ENCODE measurements at regions of chr1 and their contacts with region 1.

Region 1: GRCh38 chr1:202009326-202010179 is 834 bp upstream of the ELF3 start:
- DNase-seq: peak; percentile 91 to 92
- ATAC-seq: peak; percentile 58 to 67
- H3K4me3 ChIP-seq: peak overlapping the region; percentile 95
- H3K27ac ChIP-seq: peak overlapping the region; percentile 93 to 94
- H3K4me1 ChIP-seq: peaks cover 55% of the 10 kb centered on the region
- CTCF ChIP-seq: peak; percentile 95
- EP300 ChIP-seq: no peak
- POLR2A ChIP-seq: no peak
- RAD21 ChIP-seq: peak; percentile 96 to 97

Region 2: DNA sequence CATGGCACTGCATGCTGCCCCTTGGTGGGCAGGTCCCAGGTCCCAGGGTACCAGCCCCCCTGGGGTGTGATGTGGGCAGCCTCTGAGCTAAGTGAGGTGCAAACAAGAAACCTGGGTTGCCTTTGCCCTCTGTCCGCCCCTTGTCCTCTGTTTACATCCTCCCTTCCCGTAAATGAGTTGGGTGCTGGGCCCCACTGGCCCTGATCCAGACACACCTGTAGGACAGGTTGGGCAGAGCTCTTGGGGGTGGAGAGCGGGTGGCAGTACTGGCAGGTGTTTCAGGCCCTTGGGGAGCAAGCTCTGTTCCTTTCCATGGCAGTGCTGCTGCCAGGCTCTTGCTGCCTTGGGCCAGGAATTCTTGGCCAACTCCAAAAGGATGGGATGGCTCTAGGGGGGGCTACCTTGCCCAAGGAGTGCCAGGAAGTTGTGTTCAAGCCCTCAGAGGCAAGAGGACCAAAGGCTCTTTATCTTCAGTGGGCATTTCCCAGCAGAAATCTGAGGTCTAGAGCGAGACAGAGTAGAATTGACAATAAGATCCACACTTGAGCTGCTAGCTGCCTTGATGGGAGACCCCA is 36.8 kb after region 1 on chr1:
- CTCF ChIA-PET with region 1: interaction called, 7 read pairs
- POLR2A ChIA-PET with region 1: interaction called, 36 read pairs
- DNase-seq: no peak
- ATAC-seq: peak; percentile 3 to 4; a peak in 3 of 6 replicates
- H3K4me3 ChIP-seq: no peak overlapping the region
- H3K27ac ChIP-seq: peak overlapping the region; percentile 85 to 97
- H3K4me1 ChIP-seq: peaks cover 83% of the 10 kb centered on the region
- CTCF ChIP-seq: no peak
- EP300 ChIP-seq: no peak
- POLR2A ChIP-seq: no peak
- RAD21 ChIP-seq: no peak

Region 3: GRCh38 chr1:202063100-202063499 is 53.5 kb after region 1 on chr1:
- CTCF ChIA-PET with region 1: interaction called, 26 read pairs
- POLR2A ChIA-PET with region 1: interaction called, 70 read pairs
- DNase-seq: peak in 1 of 2 experiments; percentile 95
- ATAC-seq: peak; percentile 47 to 55
- H3K4me3 ChIP-seq: no peak overlapping the region
- H3K27ac ChIP-seq: peak overlapping the region; percentile 97 to 98
- H3K4me1 ChIP-seq: peaks cover 74% of the 10 kb centered on the region
- CTCF ChIP-seq: no peak
- EP300 ChIP-seq: peak; percentile 64 to 76; a peak in 3 of 5 replicates
- POLR2A ChIP-seq: no peak
- RAD21 ChIP-seq: 0 out of 5 replicates have a peak, but pooled peaks of 1 of the 2 experiments have one; percentile 24

Region 4: GRCh38 chr1:202084750-202085681 is 75.5 kb after region 1 on chr1:
- CTCF ChIA-PET with region 1: interaction called, 8 read pairs
- POLR2A ChIA-PET with region 1: interaction called, 18 read pairs
- DNase-seq: peak in 1 of 2 experiments; percentile 70
- ATAC-seq: peak; percentile 64 to 68
- H3K4me3 ChIP-seq: no peak overlapping the region
- H3K27ac ChIP-seq: peak overlapping the region; percentile 60 to 79
- H3K4me1 ChIP-seq: peaks cover 58% of the 10 kb centered on the region
- CTCF ChIP-seq: no peak
- EP300 ChIP-seq: no peak
- POLR2A ChIP-seq: no peak
- RAD21 ChIP-seq: no peak

Region 5: DNA sequence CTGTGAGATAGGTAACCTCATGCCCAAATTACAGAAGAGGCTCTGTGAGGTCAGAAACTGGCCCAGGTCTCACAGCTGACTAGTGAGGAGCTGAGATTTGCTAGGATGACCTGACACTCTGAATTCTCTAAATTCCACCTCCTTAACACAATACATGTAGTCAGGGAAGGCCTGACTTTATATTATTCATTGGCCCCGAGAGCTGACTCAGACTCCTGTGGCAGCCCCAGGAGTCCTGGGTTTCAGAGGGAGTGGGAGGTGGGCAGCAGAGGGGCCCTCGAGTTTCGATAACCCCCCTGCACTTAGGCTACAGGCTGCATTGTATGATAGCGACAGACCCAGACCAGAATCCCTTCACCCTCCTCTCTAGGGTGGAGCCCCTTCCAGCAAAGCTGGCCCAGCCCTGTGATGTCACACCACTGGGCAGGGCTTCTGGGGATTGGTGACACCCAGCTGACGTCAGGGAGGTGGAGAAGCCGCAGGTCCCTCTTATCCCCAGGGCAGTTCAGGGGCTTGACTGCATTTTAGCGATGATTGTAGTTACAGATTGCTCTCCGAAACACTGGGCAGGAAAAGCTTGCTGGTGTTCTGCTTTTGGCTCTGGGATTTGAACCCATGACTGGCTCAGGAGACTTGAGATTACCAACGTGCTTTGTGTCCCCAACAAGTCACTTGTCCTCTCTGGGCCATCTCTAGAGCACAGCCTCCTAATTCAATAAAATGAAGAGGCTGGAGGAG is 96.2 kb after region 1 on chr1:
- CTCF ChIA-PET with region 1: interaction called, 1,624 read pairs
- POLR2A ChIA-PET with region 1: interaction called, 69 read pairs
- DNase-seq: peak; percentile 91 to 93
- ATAC-seq: peak; percentile 85 to 89
- H3K4me3 ChIP-seq: no peak overlapping the region
- H3K27ac ChIP-seq: peak overlapping the region; percentile 91 to 94
- H3K4me1 ChIP-seq: peaks cover 66% of the 10 kb centered on the region
- CTCF ChIP-seq: no peak
- EP300 ChIP-seq: no peak
- POLR2A ChIP-seq: no peak
- RAD21 ChIP-seq: 0 out of 5 replicates have a peak, but pooled peaks of 1 of the 2 experiments have one; percentile 11

Region 6: DNA sequence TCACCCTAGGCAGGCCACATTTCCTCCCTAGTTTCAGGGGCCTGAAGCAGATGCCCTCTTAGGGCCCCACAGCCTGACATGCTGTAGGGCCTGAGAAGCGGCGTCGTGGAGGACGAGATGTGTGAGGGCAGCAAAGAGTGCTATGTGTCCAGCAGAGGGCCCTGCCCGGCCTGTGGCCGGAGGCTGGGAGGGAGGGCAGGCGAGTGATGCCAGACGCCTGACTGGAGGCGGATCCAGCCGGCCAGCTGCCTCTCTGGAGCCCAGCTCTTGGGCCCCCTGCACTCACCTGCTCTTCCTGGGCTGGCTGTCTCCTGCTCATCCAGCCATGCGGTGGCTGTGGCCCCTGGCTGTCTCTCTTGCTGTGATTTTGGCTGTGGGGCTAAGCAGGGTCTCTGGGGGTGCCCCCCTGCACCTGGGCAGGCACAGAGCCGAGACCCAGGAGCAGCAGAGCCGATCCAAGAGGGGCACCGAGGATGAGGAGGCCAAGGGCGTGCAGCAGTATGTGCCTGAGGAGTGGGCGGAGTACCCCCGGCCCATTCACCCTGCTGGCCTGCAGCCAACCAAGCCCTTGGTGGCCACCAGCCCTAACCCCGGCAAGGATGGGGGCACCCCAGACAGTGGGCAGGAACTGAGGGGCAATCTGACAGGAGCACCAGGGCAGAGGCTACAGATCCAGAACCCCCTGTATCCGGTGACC is 113.2 kb after region 1 on chr1 and contains the start of gene GPR37L1:
- CTCF ChIA-PET with region 1: interaction called, 1,624 read pairs
- POLR2A ChIA-PET with region 1: interaction called, 69 read pairs
- DNase-seq: peak; percentile 64 to 75
- ATAC-seq: peak; percentile 76 to 85
- H3K4me3 ChIP-seq: no peak within 1 kb of the TSS
- H3K27ac ChIP-seq: peak within 1 kb of the TSS in 1 of 2 experiments; percentile 60; a peak in 3 of 6 replicates
- H3K4me1 ChIP-seq: peaks cover 20% of the 10 kb centered on the region
- CTCF ChIP-seq: peak; percentile 46
- EP300 ChIP-seq: no peak
- POLR2A ChIP-seq: no peak
- RAD21 ChIP-seq: peak; percentile 18 to 38; a peak in 1 of 5 replicates
- polyA plus RNA-seq, gene GPR37L1: 0.13 and 0.15 TPM in 2 replicates